SK-N-SH (cell line): ENCODE measurements at regions of chr1 and their contacts with region 1.

Region 1: GRCh38 chr1:115052454-115053083 is 22.9 kb downstream of the TSHB start:
- DNase-seq: peak; percentile 61
- H3K4me3 ChIP-seq: no peak overlapping the region; a peak in 1 of 4 replicates
- H3K27ac ChIP-seq: no peak overlapping the region
- H3K4me1 ChIP-seq: no peaks in the 10 kb centered on the region
- H3K27me3 ChIP-seq: no peaks in the 10 kb centered on the region
- CTCF ChIP-seq: peak; percentile 88
- EP300 ChIP-seq: no peak
- RAD21 ChIP-seq: peak; percentile 68

Region 2: DNA sequence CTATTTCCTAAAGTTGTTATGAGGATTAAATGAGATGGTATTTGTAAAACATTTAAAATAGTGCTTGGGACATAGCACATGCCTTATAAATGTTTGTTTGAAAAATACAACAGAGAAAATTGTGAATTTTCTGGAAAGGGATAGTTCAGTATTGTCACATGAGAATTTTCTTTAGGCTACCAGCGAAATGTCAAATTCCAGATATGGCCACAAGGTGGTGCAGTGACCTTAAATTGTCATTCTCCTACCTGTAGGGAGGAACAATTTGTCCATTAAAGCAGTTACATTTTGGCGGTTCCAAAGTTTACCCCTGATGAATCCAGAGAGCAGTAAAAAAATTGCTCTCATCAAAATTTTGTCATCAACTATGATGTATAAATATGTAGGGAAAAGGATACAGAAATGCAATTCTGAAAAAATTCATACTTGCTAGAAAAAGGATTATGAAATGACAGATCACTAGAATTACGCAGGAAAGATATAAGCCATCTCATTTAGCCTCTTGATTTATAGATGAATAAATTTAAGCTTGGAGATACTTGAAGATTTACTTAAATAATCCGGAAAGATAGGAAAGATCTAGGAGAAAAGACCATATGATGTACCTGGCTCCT is 73.2 kb before region 1 on chr1:
- CTCF ChIA-PET with region 1: interaction called, 12 read pairs
- POLR2A ChIA-PET with region 1: no interaction called
- DNase-seq: peak; percentile 15
- H3K4me3 ChIP-seq: no peak overlapping the region
- H3K27ac ChIP-seq: no peak overlapping the region
- H3K4me1 ChIP-seq: no peaks in the 10 kb centered on the region
- H3K27me3 ChIP-seq: no peaks in the 10 kb centered on the region
- CTCF ChIP-seq: peak; percentile 84
- EP300 ChIP-seq: no peak
- RAD21 ChIP-seq: peak; percentile 83

Region 3: GRCh38 chr1:115041654-115042053 is 10.9 kb before region 1 on chr1:
- CTCF ChIA-PET with region 1: interaction called, 84 read pairs
- POLR2A ChIA-PET with region 1: no interaction called
- DNase-seq: no peak
- H3K4me3 ChIP-seq: no peak overlapping the region
- H3K27ac ChIP-seq: no peak overlapping the region
- H3K4me1 ChIP-seq: no peaks in the 10 kb centered on the region
- H3K27me3 ChIP-seq: no peaks in the 10 kb centered on the region
- CTCF ChIP-seq: peak; percentile 39; the same call in 1 of the 2 replicates
- EP300 ChIP-seq: no peak
- RAD21 ChIP-seq: peak; percentile 56

Region 4: DNA sequence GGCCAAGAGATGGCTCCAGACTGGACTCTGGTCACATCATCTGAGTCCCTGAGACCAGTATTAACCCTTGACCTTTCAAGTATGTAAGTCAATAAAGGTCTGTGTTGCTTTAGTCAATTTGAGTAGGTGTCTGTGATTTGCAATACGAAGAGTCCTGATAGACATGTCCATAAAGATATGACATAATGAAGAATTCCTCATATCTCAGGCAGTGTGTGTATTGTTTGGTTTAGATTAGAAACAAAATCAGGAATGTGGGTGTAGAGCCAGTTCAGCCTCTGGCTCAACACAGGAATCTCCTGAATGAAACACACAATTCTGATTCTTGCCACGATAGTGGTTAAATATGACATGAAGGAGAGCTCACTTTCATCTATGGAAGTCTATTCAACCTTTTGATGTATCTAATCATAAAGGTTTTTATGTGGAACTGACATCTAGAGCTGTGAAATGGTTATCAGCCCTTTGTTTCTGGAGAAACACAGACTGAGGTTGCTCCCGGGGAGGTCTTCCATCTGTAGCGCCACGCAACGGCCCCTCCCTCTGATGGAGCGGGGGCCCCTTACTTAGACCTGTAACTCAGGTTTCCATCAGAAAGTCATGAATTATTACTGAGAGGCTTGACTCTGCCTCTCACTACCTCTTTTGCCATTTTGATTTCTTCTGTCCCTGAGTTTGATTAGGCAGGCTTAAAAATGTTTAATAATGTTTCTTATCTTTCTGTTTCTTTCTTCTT is 17.2 kb after region 1 on chr1:
- CTCF ChIA-PET with region 1: interaction called, 17 read pairs
- POLR2A ChIA-PET with region 1: no interaction called
- DNase-seq: no peak
- H3K4me3 ChIP-seq: no peak overlapping the region
- H3K27ac ChIP-seq: no peak overlapping the region
- H3K4me1 ChIP-seq: peaks cover 0 to 5% of the 10 kb centered on the region in 2 experiments; a peak in 1 of 4 replicates
- H3K27me3 ChIP-seq: no peaks in the 10 kb centered on the region; the same call in 1 of the 2 replicates
- CTCF ChIP-seq: no peak
- EP300 ChIP-seq: no peak
- RAD21 ChIP-seq: no peak

Region 5: DNA sequence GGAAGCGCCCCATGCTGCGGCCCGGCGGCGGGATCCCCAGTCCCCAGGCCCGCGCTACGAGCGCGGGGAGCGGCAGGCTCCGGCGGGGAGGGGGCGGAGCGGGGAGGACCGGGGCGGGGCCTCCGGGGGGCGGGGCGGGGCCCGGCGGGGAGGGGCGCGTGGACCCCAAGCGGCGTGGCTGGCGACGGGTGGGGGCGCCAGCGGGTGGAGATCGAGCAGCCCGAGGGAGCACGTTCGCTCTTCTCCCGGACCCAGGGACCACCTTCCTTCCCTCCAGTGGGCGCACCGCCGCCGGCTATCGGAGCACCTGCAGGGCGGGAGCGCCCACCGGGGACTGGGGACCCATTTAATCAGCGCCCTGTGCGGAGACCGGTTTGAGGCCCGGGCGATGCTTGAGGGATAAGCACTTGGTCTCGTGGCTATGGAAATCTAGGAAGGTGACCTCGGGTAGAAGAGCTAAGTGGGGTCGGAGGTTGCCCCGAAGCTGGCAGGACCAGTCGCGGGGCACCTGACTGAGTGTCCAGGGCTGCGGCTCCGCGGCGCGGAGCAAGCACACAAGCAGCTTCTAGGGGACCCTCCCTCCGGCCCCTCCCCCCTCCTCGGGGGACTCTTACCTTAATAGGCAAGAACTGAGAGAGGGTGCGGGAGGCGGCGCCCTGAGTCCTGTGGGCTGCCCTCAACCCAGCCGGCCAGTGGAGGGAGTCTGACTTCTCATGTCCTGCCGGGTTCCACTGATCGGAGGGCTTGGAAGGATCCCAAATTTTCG is 37.0 kb after region 1 on chr1 and contains the start of gene TSPAN2:
- CTCF ChIA-PET with region 1: interaction called, 15 read pairs
- POLR2A ChIA-PET with region 1: no interaction called
- DNase-seq: peak; percentile 93
- H3K4me3 ChIP-seq: peak within 1 kb of the TSS; percentile 63
- H3K27ac ChIP-seq: no peak within 1 kb of the TSS; a peak in 1 of 4 replicates
- H3K4me1 ChIP-seq: peaks cover 7 to 24% of the 10 kb centered on the region in 2 experiments; a peak in 3 of 4 replicates
- H3K27me3 ChIP-seq: no peaks in the 10 kb centered on the region
- CTCF ChIP-seq: peak; percentile 35
- EP300 ChIP-seq: no peak
- RAD21 ChIP-seq: no peak; the same call in 1 of the 2 replicates
- polyA plus RNA-seq, gene TSPAN2: 0.21 and 0.23 TPM in 2 replicates